Activated CD8-positive, alpha-beta T cell treated with anti-CD3 and anti-CD28 coated beads for 36 hours (primary cell): ENCODE measurements at regions of chr10 and their contacts with region 1.

Region 1: GRCh38 chr10:15106352-15107013 is 9.3 kb downstream of the RPP38 start:
- DNase-seq: peak; percentile 85
- ATAC-seq: peak; percentile 99
- H3K4me3 Mint-ChIP-seq: no peak overlapping the region
- H3K27ac Mint-ChIP-seq: no peak overlapping the region
- H3K4me1 Mint-ChIP-seq: peaks cover 10% of the 10 kb centered on the region
- H3K27me3 Mint-ChIP-seq: no peaks in the 10 kb centered on the region
- CTCF ChIP-seq: peak; percentile 90

Region 2: DNA sequence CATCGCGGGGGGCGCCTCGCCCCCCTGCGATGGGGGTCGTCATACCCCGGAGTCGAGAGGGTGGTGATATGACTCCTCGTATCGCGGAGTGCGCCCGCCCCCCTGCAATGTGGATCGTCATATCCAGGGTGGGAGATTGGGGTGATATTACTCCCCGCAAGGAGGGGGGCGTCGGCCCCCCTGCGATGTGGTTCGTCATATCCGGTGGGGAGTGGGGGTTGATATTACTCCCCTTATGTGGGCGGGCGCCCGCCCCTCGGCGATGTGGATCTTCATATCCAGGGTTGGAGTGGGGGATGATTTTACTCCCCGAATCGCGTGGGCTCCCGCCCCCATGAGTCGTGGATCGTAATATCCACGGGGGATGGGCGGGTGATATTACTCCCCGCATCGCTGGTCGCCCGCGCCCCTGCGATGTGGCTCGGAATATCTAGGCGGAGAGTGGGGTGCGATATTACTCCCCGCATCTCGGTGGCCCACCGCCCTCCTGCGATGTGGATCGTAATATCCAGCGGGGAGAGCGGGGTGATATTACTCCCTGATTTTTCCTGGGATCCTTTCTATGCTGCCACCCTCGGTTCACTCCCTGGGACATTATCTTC is 110.4 kb before region 1 on chr10:
- CTCF ChIA-PET with region 1: no interaction called
- POLR2A ChIA-PET with region 1: no interaction called
- intact Hi-C with region 1: no loop called
- DNase-seq: no peak
- ATAC-seq: no peak
- H3K4me3 Mint-ChIP-seq: no peak overlapping the region
- H3K27ac Mint-ChIP-seq: no peak overlapping the region
- H3K4me1 Mint-ChIP-seq: peaks cover 4% of the 10 kb centered on the region
- H3K27me3 Mint-ChIP-seq: peaks cover 1% of the 10 kb centered on the region
- CTCF ChIP-seq: no peak

Region 3: DNA sequence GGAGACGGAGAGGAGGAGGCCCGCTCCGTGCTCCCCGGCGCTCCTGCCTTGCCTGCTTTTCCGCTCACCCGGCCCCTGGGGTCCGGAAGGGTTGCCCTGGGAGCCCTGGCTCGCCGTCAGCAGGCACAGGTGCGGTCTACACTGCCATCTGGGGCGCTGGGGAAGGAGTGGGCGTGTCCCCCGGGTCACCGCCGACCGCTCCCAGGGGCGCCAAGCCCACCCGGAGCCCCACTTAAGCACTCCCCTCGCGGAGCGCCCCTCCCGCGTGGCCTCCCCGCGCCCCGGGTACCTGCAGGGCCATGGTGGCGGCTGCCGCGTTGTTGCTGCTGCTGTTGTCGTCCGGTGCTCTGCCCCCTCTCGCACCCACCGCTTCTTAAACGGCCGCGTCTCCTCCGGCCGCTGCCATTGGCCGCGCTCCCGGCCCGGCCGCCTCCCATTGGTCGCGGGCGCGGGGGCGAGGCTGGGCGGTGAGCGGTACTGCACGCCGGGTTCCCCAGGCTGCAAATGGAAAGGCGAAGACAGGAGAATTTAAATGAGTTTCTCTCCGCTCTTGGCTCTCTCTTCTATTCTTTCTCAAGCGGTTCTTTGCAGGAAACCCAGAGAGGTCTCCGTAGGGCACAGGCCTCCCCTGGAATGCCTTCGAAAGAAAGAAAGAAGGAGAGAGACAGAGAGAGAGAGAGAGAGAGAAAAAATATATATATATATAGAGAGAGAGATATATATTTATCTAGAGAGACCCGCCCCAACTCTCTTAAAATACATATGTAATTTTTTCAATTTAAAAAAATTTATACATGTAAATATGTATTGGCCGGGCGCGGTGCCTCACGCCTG is 17.8 kb before region 1 on chr10 and contains the start of gene ACBD7:
- CTCF ChIA-PET with region 1: interaction called, 16 read pairs
- POLR2A ChIA-PET with region 1: no interaction called
- intact Hi-C with region 1: no loop called
- DNase-seq: peak; percentile 89
- ATAC-seq: peak; percentile 100
- H3K4me3 Mint-ChIP-seq: peak within 1 kb of the TSS; percentile 67
- H3K27ac Mint-ChIP-seq: no peak within 1 kb of the TSS
- H3K4me1 Mint-ChIP-seq: no peaks in the 10 kb centered on the region
- H3K27me3 Mint-ChIP-seq: no peaks in the 10 kb centered on the region
- CTCF ChIP-seq: peak; percentile 66
- total RNA-seq, gene ACBD7: 1.6 to 2.0 TPM

Region 4: DNA sequence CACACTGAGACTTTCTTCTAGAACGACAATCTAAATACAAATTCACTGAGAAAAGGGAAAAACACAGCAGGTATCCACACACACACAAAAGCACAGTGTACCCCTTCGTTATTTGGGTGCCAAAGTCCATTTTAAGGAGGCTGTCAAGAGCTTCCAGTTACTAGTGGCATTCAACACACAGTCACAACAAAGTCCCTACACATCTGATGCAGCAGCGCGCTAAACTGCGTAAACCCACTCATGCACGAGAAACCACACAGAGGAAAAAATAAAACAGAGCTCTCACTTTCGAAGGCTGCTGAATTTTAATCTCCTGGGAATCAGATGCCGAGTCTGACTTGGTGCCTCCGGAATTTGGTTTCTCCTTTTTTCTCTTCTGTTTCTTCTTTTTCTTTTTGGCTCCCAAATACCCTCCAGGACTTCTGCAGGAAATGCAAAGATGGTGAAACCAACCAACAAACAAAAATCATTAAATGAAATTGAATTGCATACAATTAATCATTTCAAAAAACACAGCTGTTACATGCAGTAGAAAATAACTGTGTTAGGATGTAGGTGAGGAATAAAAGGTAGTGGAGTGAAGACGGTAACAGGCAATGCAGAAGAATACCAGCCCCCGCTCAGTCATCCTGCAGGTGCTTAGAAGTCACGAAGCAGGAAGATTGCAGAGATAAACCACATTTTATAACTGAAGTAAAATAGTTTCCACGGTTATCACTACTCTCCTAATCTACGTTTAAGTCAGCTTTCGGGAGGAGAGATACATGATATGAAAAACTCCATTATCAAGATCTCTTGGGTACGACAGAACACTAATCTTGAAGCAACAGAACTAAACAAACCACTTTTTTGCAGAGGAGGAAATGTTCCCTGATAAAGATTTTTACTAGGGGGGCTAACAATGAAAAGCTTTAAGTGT is 34.9 kb after region 1 on chr10:
- CTCF ChIA-PET with region 1: interaction called, 10 read pairs
- POLR2A ChIA-PET with region 1: no interaction called
- intact Hi-C with region 1: no loop called
- DNase-seq: peak; percentile 60
- ATAC-seq: peak; percentile 78
- H3K4me3 Mint-ChIP-seq: peak overlapping the region; percentile 57
- H3K27ac Mint-ChIP-seq: peak overlapping the region; percentile 78
- H3K4me1 Mint-ChIP-seq: peaks cover 44% of the 10 kb centered on the region
- H3K27me3 Mint-ChIP-seq: no peaks in the 10 kb centered on the region
- CTCF ChIP-seq: no peak

Region 5: DNA sequence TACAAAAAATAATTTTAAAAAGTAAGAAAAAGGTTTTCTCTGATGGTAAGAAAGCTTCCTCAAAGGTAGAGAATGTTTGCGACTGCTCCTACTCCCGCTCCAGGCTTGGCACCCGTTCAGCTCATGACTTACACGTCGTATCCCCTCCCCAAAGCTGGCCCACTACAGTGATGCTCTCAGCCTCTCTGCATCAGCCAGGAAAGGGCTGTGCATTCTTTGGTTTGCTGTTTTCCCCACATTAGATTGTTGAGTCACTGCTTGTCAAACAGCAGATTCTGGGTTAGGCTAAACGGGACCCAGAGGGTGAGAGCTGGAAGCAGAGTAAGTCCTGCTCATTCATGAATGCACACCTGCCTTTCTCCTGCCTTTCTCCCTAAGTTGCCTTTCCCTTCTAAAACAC is 116.7 kb after region 1 on chr10:
- CTCF ChIA-PET with region 1: no interaction called
- POLR2A ChIA-PET with region 1: no interaction called
- intact Hi-C with region 1: no loop called
- DNase-seq: no peak
- ATAC-seq: no peak
- H3K4me3 Mint-ChIP-seq: no peak overlapping the region
- H3K27ac Mint-ChIP-seq: no peak overlapping the region
- H3K4me1 Mint-ChIP-seq: no peaks in the 10 kb centered on the region
- H3K27me3 Mint-ChIP-seq: no peaks in the 10 kb centered on the region
- CTCF ChIP-seq: no peak

Region 6: GRCh38 chr10:15313843-15314242 is 207.4 kb after region 1 on chr10:
- CTCF ChIA-PET with region 1: no interaction called
- POLR2A ChIA-PET with region 1: no interaction called
- intact Hi-C with region 1: no loop called
- DNase-seq: no peak
- ATAC-seq: no peak
- H3K4me3 Mint-ChIP-seq: no peak overlapping the region
- H3K27ac Mint-ChIP-seq: no peak overlapping the region
- H3K4me1 Mint-ChIP-seq: peaks cover 2% of the 10 kb centered on the region
- H3K27me3 Mint-ChIP-seq: no peaks in the 10 kb centered on the region
- CTCF ChIP-seq: no peak